ENCODE measurements at regions of chr2 and their contacts with region 1.

Region 1: DNA sequence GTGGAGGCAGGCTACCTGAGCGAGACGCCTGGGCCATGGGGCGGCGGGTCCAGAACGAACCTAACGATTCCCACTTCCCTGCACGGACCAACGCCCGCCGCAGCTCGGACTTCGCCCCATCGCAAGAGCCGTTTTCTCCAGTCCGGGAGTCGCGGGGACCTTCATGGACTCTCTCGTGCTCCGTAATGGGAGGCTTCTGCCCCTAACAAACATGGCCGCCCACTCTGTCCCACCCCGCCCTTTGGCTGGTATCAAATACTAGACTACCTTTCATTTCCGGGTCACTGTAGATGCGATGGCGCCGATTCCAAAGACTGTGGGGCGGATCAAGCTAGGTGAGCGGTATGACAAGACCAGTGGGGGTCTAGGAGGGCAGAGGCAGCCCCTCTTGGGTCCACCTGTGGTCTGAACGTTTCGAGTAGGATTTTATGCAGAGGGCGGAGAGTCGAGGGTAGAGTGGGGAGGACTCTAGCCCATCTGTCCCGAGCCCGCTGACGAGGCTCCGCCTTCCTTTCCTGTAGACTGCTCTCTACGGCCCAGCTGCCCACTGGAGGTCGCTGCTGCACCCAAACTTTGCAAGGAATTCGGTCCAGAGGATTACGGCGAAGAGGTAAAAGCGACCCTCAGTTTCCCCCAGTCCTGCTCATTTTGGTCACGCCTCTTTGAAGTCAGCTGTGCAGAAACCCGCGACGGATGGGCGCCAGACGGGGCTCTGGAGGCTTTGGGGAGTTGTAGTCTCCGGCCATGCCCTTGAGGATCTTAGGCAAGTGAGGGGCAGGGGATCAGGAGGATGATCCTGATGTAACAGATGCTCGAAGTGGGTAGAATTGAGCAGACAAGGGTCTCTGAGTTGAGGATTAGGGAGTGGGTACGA is at the starts of genes CCDC142 and TTC31:
- DNase-seq: peak; percentile 92 to 99
- H3K4me3 ChIP-seq: peak within 1 kb of the TSS; percentile 80 to 85
- H3K27ac ChIP-seq: peak within 1 kb of the TSS; percentile 85 to 90
- H3K4me1 ChIP-seq: peaks cover 9 to 21% of the 10 kb centered on the region in 2 donors
- H3K27me3 ChIP-seq: no peaks in the 10 kb centered on the region
- CTCF ChIP-seq: peak; percentile 83 to 91 (median 86)
- total RNA-seq, gene CCDC142: 16.5 TPM
- total RNA-seq, gene TTC31: 19.5 TPM

Region 2: GRCh38 chr2:74472086-74472944 is 10.7 kb before region 1 on chr2 and contains the start of gene MRPL53:
- intact Hi-C with region 1: loop called (anchors 1 kb)
- DNase-seq: peak; percentile 70 to 96
- H3K4me3 ChIP-seq: peak within 1 kb of the TSS; percentile 63 to 81
- H3K27ac ChIP-seq: peak within 1 kb of the TSS; percentile 88 to 95
- H3K4me1 ChIP-seq: peaks cover 10 to 14% of the 10 kb centered on the region in 2 donors
- H3K27me3 ChIP-seq: no peaks in the 10 kb centered on the region
- CTCF ChIP-seq: no peak
- total RNA-seq, gene MRPL53: 37.7 TPM

Region 3: DNA sequence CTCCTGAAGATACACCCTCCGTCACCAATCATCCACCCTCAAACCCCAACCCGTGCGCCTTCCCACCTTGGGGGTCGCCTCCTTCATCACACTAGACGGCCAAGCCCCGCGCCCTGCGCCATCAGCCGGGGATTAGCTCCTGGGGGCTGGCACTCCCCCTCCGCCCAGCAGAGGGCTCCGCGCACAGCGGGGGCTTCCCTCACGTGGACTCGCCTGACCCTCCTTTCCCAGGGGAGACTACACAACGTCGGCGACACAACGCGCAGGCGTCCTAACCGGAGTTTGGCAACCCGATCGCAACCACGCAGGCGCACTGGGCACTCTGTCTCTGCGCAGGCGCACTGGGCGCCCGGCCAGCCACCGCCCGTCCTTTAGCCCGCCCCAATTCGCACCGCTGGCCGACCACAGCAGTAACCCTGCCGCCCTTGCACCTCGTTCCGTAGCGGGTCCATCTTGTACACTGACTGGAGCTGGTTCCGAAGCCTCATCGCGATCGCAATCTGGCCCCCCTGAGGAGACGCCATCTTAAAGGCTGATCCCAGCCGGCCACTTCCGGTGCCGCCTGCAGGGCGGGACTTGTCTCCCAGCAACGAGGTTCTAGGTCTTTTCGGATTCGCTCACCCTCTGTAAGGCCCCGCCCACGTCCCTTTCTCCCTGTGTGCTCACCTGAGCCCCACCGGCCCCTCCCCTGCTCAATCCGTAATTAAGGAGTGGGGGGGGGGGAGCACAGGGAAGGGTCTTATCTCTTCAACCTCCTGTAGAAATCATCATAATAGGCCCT is 24.3 kb after region 1 on chr2 and contains the start of gene PCGF1:
- intact Hi-C with region 1: loop called (anchors 1 kb)
- DNase-seq: peak; percentile 97 to 99
- H3K4me3 ChIP-seq: peak within 1 kb of the TSS; percentile 76 to 78
- H3K27ac ChIP-seq: peak within 1 kb of the TSS; percentile 99
- H3K4me1 ChIP-seq: peaks cover 3 to 24% of the 10 kb centered on the region in 2 donors
- H3K27me3 ChIP-seq: no peaks in the 10 kb centered on the region
- CTCF ChIP-seq: peak in 2 of 3 experiments; percentile 19 to 27
- total RNA-seq, gene PCGF1: not detected

Region 4: DNA sequence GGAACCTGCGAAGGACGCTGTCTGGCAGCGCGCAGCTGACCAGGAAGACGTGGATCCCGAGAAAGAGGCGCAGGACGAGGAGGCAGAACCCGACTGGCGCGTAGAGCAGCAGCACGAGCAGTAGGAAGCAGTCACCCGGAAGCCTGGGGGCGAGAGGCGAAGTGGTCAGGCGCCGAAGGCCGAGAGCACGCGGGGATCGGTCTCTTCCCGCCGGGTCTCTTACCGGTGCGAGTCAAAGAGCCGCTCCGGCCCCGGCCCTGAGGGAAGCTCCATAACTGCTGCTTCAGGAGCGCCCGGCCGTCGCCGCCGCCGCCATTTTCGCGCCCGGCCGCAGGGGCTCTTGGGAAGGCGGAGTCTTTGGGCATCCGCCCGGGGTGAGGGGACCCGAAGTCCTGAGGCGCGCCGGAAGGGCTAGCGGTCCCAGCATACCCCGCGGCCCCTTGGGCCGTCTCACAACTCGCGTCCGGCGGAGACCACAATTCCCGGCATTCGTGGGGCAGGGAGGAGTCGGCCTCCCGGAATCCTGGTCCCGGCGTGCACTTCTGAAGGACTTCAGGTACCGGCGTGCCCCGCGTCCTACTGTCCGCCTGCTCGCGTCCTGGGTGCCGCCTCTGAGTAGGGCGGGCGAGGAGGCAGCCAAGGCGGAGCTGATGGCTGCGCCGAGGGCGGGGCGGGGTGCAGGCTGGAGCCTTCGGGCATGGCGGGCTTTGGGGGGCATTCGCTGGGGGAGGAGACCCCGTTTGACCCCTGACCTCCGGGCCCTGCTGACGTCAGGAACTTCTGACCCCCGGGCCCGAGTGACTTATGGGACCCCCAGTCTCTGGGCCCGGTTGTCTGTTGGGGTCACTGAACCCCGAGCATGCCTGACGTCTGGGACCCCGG is 46.6 kb after region 1 on chr2 and contains the starts of genes AUP1 and HTRA2:
- intact Hi-C with region 1: loop called (anchors 1 kb)
- DNase-seq: peak; percentile 95 to 99
- H3K4me3 ChIP-seq: peak within 1 kb of the TSS; percentile 78 to 85
- H3K27ac ChIP-seq: peak within 1 kb of the TSS; percentile 84 to 88
- H3K4me1 ChIP-seq: peaks cover 13 to 21% of the 10 kb centered on the region in 2 donors
- H3K27me3 ChIP-seq: no peaks in the 10 kb centered on the region
- CTCF ChIP-seq: peak in 1 of 3 experiments; percentile 18
- total RNA-seq, gene AUP1: 120 TPM
- total RNA-seq, gene HTRA2: 80.1 TPM

Region 5: DNA sequence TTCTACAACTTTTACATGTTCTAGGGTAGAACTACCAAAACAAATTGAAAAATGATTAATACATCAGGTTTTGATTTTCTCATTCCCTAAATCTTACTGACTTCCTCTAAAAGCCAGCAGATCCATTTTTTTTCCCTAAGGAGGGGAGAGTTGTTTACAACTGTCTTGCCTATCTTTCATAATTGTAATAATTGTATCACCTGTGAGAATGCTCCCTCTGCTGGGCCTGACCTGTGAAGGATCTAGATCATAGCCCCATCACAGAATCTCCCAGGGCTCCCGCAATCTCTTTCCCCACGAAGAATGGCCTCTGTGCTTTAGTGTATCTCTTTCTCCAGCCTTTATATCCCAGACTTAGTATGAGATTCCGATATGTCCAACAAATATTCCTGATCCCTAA is 61.6 kb after region 1 on chr2:
- intact Hi-C with region 1: no loop called
- DNase-seq: peak in 1 of 2 donors; percentile 25
- H3K4me3 ChIP-seq: no peak overlapping the region
- H3K27ac ChIP-seq: no peak overlapping the region
- H3K4me1 ChIP-seq: peaks cover 5 to 6% of the 10 kb centered on the region in 2 donors
- H3K27me3 ChIP-seq: no peaks in the 10 kb centered on the region
- CTCF ChIP-seq: no peak

Region 6: DNA sequence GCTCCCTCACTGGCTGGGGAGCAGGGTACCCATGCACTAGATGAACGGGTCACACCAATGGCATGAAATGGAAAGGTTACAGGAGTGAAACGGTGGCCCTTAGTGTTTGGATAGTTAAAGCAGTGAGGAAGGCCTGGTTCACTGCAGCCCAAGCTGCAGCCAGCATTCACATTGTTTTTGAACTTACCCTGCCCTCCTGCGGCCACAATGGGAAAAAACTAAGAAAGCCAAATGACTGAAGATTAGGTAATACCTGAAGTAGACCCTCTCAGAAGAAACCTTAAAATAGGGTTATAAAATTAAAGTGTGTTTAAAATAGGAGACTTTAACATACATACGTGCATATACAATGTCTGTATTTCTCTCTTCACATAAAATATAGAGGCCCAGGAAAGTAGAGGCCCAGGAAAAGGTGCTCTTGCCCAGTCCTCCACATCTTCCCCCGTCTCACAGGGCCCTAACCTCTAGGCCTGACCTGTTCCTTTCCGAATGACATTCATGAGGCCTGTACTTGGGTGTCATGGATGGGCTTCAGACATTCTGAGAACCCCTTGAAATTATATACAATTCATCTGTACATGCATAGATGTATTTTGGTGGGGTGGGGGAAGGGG is 104.7 kb after region 1 on chr2:
- intact Hi-C with region 1: loop called (anchors 1 kb)
- DNase-seq: peak in 1 of 2 donors; percentile 84
- H3K4me3 ChIP-seq: no peak overlapping the region
- H3K27ac ChIP-seq: no peak overlapping the region
- H3K4me1 ChIP-seq: peaks cover 0 to 19% of the 10 kb centered on the region in 2 donors
- H3K27me3 ChIP-seq: no peaks in the 10 kb centered on the region
- CTCF ChIP-seq: peak; percentile 63 to 71 (median 65)

Measured in ascending aorta (tissue), 2 donors.